Gastrocnemius medialis (tissue), 4 donors: ENCODE measurements at regions of chr16 and their contacts with region 1.

Region 1: DNA sequence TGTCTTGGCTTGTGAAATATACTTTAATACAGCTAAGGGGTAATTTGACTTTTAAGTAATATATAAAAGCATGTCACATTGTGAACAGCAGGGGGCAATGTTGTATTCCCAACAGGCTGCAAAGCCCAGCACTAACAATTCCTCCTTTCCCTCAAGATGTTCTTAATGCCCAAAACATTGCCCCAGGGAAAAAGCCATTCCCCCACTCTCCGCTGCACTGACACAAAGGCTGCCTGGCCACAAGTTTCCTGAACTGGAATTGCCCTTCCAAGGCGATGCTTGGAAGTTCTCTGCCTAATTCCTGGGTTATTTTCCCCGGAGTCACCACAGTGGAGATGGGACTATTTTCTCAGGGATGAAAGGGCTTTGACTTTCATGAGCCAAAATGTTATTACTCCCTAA is 27.2 kb downstream of the CLEC16A start:
- DNase-seq: peak; percentile 40 to 47
- ATAC-seq: peak; percentile 68 to 82
- H3K4me3 ChIP-seq: no peak overlapping the region
- H3K27ac ChIP-seq: peak overlapping the region in 1 of 4 donors; percentile 9
- H3K4me1 ChIP-seq: no peaks in the 10 kb centered on the region
- H3K27me3 ChIP-seq: no peaks in the 10 kb centered on the region
- CTCF ChIP-seq: peak; percentile 61 to 84 (median 81)
- POLR2A ChIP-seq: no peak

Region 2: GRCh38 chr16:11094857-11095565 is 123.5 kb after region 1 on chr16:
- in situ Hi-C with region 1: no loop called
- intact Hi-C with region 1: loop called (anchors 5 kb)
- DNase-seq: no peak
- ATAC-seq: no peak
- H3K4me3 ChIP-seq: no peak overlapping the region
- H3K27ac ChIP-seq: no peak overlapping the region
- H3K4me1 ChIP-seq: peaks cover 2 to 4% of the 10 kb centered on the region in 2 donors
- H3K27me3 ChIP-seq: no peaks in the 10 kb centered on the region
- CTCF ChIP-seq: no peak
- POLR2A ChIP-seq: no peak

Region 3: GRCh38 chr16:11263737-11264136 is 292.2 kb after region 1 on chr16:
- in situ Hi-C with region 1: loop called (anchors 5 to 10 kb)
- intact Hi-C with region 1: no loop called
- DNase-seq: no peak
- ATAC-seq: no peak
- H3K4me3 ChIP-seq: no peak overlapping the region
- H3K27ac ChIP-seq: no peak overlapping the region
- H3K4me1 ChIP-seq: peaks cover 0 to 5% of the 10 kb centered on the region in 2 donors
- H3K27me3 ChIP-seq: no peaks in the 10 kb centered on the region
- CTCF ChIP-seq: no peak
- POLR2A ChIP-seq: no peak